ENCODE measurements at regions of chr17 and their contacts with region 1.

Region 1: GRCh38 chr17:34420254-34420766 is 57.3 kb upstream of the CCL1 start:
- DNase-seq: peak; percentile 26
- H3K4me3 ChIP-seq: no peak overlapping the region
- H3K27ac ChIP-seq: no peak overlapping the region
- H3K4me1 ChIP-seq: no peaks in the 10 kb centered on the region
- H3K27me3 ChIP-seq: no peaks in the 10 kb centered on the region
- CTCF ChIP-seq: peak; percentile 87 to 88

Region 2: DNA sequence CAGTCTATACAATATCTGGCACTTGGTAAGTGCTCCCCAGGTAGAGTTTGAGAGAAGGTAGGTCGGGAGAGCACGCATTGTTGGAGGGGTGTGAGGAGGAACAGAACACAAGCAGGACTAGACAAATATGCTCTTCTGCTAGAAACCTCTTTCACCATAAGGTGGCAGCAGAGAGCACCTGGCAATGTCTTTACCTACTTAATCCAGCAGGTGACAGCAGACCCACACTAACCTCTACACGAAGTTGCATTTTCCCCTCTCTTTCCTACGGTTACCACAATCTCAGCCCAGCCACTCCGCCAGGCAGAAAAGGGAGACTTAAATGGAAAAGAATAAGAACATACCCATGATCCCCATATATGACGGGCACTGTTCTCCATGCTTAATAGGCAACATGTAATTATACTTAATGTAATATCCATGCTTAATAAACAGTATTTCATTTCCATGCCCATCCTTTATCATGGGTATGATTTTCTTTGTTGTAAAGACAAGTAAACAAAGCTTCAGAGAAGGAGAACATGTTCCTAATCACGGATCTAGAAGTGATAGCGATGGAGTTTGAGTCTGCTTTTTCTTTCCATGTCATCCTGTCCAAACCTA is 220.3 kb before region 1 on chr17:
- CTCF ChIA-PET with region 1: no interaction called
- dilution Hi-C with region 1: no loop called
- in situ Hi-C with region 1: no loop called
- intact Hi-C with region 1: loop called (anchors 1 kb)
- DNase-seq: peak; percentile 50
- H3K4me3 ChIP-seq: no peak overlapping the region
- H3K27ac ChIP-seq: no peak overlapping the region
- H3K4me1 ChIP-seq: no peaks in the 10 kb centered on the region
- H3K27me3 ChIP-seq: no peaks in the 10 kb centered on the region
- CTCF ChIP-seq: peak; percentile 100

Region 3: GRCh38 chr17:34434052-34434451 is 13.7 kb after region 1 on chr17:
- CTCF ChIA-PET with region 1: no interaction called
- dilution Hi-C with region 1: no loop called
- in situ Hi-C with region 1: no loop called
- intact Hi-C with region 1: no loop called
- DNase-seq: no peak
- H3K4me3 ChIP-seq: no peak overlapping the region
- H3K27ac ChIP-seq: no peak overlapping the region
- H3K4me1 ChIP-seq: no peaks in the 10 kb centered on the region
- H3K27me3 ChIP-seq: no peaks in the 10 kb centered on the region
- CTCF ChIP-seq: no peak

Region 4: GRCh38 chr17:34511265-34511664 is 91.0 kb after region 1 on chr17:
- CTCF ChIA-PET with region 1: no interaction called
- dilution Hi-C with region 1: no loop called
- in situ Hi-C with region 1: no loop called
- intact Hi-C with region 1: no loop called
- DNase-seq: no peak
- H3K4me3 ChIP-seq: no peak overlapping the region
- H3K27ac ChIP-seq: no peak overlapping the region
- H3K4me1 ChIP-seq: no peaks in the 10 kb centered on the region
- H3K27me3 ChIP-seq: no peaks in the 10 kb centered on the region
- CTCF ChIP-seq: no peak

Region 5: GRCh38 chr17:34637548-34638525 is 217.5 kb after region 1 on chr17:
- CTCF ChIA-PET with region 1: no interaction called
- dilution Hi-C with region 1: no loop called
- in situ Hi-C with region 1: no loop called
- intact Hi-C with region 1: loop called (anchors 1 kb)
- DNase-seq: peak; percentile 32
- H3K4me3 ChIP-seq: peak overlapping the region in 1 of 3 experiments; percentile 3
- H3K27ac ChIP-seq: no peak overlapping the region
- H3K4me1 ChIP-seq: peaks cover 7% of the 10 kb centered on the region
- H3K27me3 ChIP-seq: no peaks in the 10 kb centered on the region
- CTCF ChIP-seq: peak; percentile 85 to 94

Region 6: GRCh38 chr17:34998205-34998604 is 577.9 kb after region 1 on chr17:
- CTCF ChIA-PET with region 1: no interaction called
- dilution Hi-C with region 1: no loop called
- in situ Hi-C with region 1: no loop called
- intact Hi-C with region 1: loop called (anchors 1 kb)
- DNase-seq: peak; percentile 57
- H3K4me3 ChIP-seq: no peak overlapping the region
- H3K27ac ChIP-seq: no peak overlapping the region
- H3K4me1 ChIP-seq: no peaks in the 10 kb centered on the region
- H3K27me3 ChIP-seq: no peaks in the 10 kb centered on the region
- CTCF ChIP-seq: peak; percentile 95 to 98

Region 7: GRCh38 chr17:35170968-35171771 is 750.9 kb after region 1 on chr17:
- CTCF ChIA-PET with region 1: no interaction called
- dilution Hi-C with region 1: no loop called
- in situ Hi-C with region 1: no loop called
- intact Hi-C with region 1: loop called (anchors 5 kb)
- DNase-seq: peak; percentile 17
- H3K4me3 ChIP-seq: no peak overlapping the region
- H3K27ac ChIP-seq: no peak overlapping the region
- H3K4me1 ChIP-seq: peaks cover 7% of the 10 kb centered on the region
- H3K27me3 ChIP-seq: no peaks in the 10 kb centered on the region
- CTCF ChIP-seq: peak; percentile 20 to 36

Region 8: DNA sequence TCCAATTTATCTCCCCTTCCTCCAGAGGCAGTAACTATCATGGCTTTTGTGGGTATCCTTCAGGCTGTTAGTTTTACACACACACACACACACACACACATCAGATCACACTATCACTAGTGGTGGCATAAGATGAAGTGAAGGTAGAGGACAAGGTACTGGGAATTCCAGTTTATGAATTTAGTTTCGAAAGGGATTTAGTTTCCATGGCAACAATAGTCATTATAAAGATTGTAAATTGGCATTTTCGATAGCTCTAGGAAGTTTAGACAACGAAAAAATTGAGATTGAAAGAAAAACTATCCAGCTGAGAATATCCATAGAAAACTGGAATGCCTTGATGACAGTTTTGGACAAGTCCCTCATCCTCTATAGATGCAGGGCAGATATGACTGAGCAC is 853.4 kb after region 1 on chr17:
- CTCF ChIA-PET with region 1: no interaction called
- dilution Hi-C with region 1: no loop called
- in situ Hi-C with region 1: no loop called
- intact Hi-C with region 1: loop called (anchors 5 kb)
- DNase-seq: no peak
- H3K4me3 ChIP-seq: no peak overlapping the region
- H3K27ac ChIP-seq: no peak overlapping the region
- H3K4me1 ChIP-seq: no peaks in the 10 kb centered on the region
- H3K27me3 ChIP-seq: no peaks in the 10 kb centered on the region
- CTCF ChIP-seq: no peak

Region 9: GRCh38 chr17:35537601-35538141 is 1117.4 kb after region 1 on chr17 and contains the start of gene SLFN12L:
- CTCF ChIA-PET with region 1: no interaction called
- dilution Hi-C with region 1: no loop called
- in situ Hi-C with region 1: no loop called
- intact Hi-C with region 1: loop called (anchors 1 kb)
- DNase-seq: no peak
- H3K4me3 ChIP-seq: no peak within 1 kb of the TSS
- H3K27ac ChIP-seq: no peak within 1 kb of the TSS
- H3K4me1 ChIP-seq: no peaks in the 10 kb centered on the region
- H3K27me3 ChIP-seq: peaks cover 2% of the 10 kb centered on the region
- CTCF ChIP-seq: no peak
- total RNA-seq, gene SLFN12L: 0.12 to 0.17 TPM